Activated T-helper 1 cell treated with anti-CD3 and anti-CD28 coated beads, Interleukin-12 subunit alpha, Interleukin-12 subunit beta, Interleukin-2, Interleukin-4 antibody, amounts not matched to agents 30 ng/mL and 10 ng/mL and 1 ng/mL, durations not matched to agents 14 hours and 24 hours and 36 hours (primary cell): ENCODE measurements at regions of chr18 and their contacts with region 1.

Region 1: GRCh38 chr18:47930931-47931717 is 665 bp upstream of the SMAD2 start:
- DNase-seq: peak; percentile 94
- H3K4me3 Mint-ChIP-seq: peak overlapping the region; percentile 82
- H3K27ac Mint-ChIP-seq: peak overlapping the region; percentile 89
- H3K4me1 Mint-ChIP-seq: peaks cover 39% of the 10 kb centered on the region
- H3K27me3 Mint-ChIP-seq: peaks cover 7% of the 10 kb centered on the region

Region 2: GRCh38 chr18:47772374-47773248 is 158.5 kb before region 1 on chr18:
- intact Hi-C with region 1: loop called (anchors 1 kb)
- DNase-seq: peak; percentile 50
- H3K4me3 Mint-ChIP-seq: no peak overlapping the region
- H3K27ac Mint-ChIP-seq: peak overlapping the region; percentile 11
- H3K4me1 Mint-ChIP-seq: peaks cover 12% of the 10 kb centered on the region
- H3K27me3 Mint-ChIP-seq: peaks cover 10% of the 10 kb centered on the region

Region 3: GRCh38 chr18:47815486-47816280 is 115.4 kb before region 1 on chr18:
- intact Hi-C with region 1: no loop called
- DNase-seq: no peak
- H3K4me3 Mint-ChIP-seq: no peak overlapping the region
- H3K27ac Mint-ChIP-seq: no peak overlapping the region
- H3K4me1 Mint-ChIP-seq: no peaks in the 10 kb centered on the region
- H3K27me3 Mint-ChIP-seq: no peaks in the 10 kb centered on the region

Region 4: GRCh38 chr18:47912343-47912742 is 18.8 kb before region 1 on chr18:
- intact Hi-C with region 1: loop called (anchors 1 kb)
- DNase-seq: no peak
- H3K4me3 Mint-ChIP-seq: peak overlapping the region; percentile 73
- H3K27ac Mint-ChIP-seq: peak overlapping the region; percentile 93
- H3K4me1 Mint-ChIP-seq: peaks cover 81% of the 10 kb centered on the region
- H3K27me3 Mint-ChIP-seq: no peaks in the 10 kb centered on the region

Region 5: GRCh38 chr18:47944972-47945843 is 14.1 kb after region 1 on chr18:
- intact Hi-C with region 1: no loop called
- DNase-seq: no peak
- H3K4me3 Mint-ChIP-seq: no peak overlapping the region
- H3K27ac Mint-ChIP-seq: no peak overlapping the region
- H3K4me1 Mint-ChIP-seq: peaks cover 6% of the 10 kb centered on the region
- H3K27me3 Mint-ChIP-seq: peaks cover 15% of the 10 kb centered on the region

Region 6: DNA sequence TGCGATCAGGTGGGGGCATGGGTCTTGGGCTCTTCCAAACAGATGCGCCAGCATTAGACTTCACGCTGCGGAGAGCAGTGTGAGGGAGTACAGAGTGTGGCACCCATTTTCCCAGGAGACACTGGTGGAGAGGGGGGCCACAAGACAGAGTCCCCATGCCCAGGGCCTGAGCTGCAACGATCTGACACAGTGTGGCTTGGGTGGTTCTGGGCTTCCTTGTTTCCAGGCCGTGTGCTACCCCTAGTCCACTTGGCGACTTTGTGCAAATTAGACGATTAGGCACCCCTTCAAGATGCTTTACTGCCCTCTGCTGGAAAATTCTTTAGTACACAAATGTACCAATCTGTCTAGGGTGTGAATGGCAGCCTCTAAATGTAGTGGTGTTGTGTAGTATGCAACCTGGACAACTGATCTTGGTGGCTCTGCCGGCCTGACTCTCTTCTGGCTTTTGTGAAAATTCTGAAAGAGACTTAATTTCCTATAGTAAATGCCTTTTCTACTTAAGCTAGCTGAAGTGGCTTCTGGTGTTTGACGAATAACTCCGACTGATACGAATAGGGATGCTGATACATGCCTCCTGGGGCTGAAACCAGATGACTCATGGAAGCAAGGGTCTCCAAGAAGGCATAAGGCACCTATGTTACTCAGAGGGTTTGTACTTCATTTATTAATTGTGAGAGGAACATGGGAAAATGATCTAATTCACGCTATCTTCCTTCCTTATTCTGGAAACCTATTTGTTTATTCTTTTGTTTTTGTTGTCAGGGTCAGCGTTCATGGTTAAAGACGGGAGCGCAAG is 91.6 kb after region 1 on chr18:
- intact Hi-C with region 1: loop called (anchors 1 kb)
- DNase-seq: no peak
- H3K4me3 Mint-ChIP-seq: no peak overlapping the region
- H3K27ac Mint-ChIP-seq: no peak overlapping the region
- H3K4me1 Mint-ChIP-seq: peaks cover 12% of the 10 kb centered on the region
- H3K27me3 Mint-ChIP-seq: peaks cover 11% of the 10 kb centered on the region

Region 7: DNA sequence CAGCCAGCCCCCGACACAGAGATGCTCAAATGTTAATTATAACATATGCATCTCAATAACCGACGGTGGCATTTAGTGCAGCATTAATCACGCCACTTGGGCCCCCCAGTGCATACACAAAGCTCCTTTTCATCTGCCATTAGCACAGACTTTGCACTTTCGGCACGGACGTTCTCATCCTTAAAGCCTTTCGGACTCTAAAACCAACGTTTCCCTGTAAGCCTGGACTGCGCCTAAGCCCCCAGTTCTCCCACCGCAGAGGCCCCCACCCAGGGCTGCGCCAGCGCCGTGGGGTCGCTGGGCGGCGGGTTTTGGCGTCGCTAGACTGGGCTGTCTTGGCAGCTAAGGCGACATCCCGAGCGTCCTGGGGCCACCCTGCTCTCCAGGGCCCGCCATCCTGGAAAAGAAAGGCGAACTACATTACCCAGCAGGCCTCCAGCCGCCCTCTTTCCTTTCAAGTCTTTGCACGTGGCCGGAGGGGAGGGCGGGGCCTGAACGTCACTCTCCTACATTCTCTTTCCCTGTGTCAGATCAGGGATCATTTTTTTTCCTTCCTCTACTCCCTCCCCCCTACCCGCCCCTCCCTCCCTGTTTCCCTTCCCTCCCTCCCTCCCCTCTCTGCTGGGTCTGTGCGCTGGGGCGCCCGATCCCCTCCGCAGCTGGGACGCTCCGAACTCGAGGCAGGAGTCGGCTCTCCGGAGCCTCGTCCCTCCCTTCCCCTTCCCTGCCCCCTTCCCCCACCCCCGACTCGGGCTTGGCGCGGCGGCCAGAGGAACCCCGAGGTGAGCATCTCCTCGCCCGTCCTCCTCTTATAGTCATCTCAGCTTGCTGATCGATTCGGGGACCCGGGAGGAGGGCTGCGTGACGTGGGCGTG is 607.6 kb after region 1 on chr18 and contains the start of gene CTIF:
- intact Hi-C with region 1: loop called (anchors 5 kb)
- DNase-seq: peak; percentile 60
- H3K4me3 Mint-ChIP-seq: peak within 1 kb of the TSS; percentile 90
- H3K27ac Mint-ChIP-seq: peak within 1 kb of the TSS; percentile 58
- H3K4me1 Mint-ChIP-seq: peaks cover 14% of the 10 kb centered on the region
- H3K27me3 Mint-ChIP-seq: peaks cover 30% of the 10 kb centered on the region
- total RNA-seq, gene CTIF: 7.2 and 8.5 TPM in 2 replicates